ENCODE measurements at regions of chr16 and their contacts with region 1.

Region 1: GRCh38 chr16:87636072-87636684 is 33.9 kb downstream of the JPH3 start:
- DNase-seq: peak; percentile 89
- ATAC-seq: peak; percentile 96 to 97

Region 2: GRCh38 chr16:87316923-87317749 is 319.0 kb before region 1 on chr16 and contains the start of gene C16orf95:
- intact Hi-C with region 1: loop called in 1 of 2 experiments (anchors 5 kb)
- DNase-seq: peak; percentile 96
- ATAC-seq: peak; percentile 98
- total RNA-seq, gene C16orf95: 3.2 to 3.4 TPM

Region 3: DNA sequence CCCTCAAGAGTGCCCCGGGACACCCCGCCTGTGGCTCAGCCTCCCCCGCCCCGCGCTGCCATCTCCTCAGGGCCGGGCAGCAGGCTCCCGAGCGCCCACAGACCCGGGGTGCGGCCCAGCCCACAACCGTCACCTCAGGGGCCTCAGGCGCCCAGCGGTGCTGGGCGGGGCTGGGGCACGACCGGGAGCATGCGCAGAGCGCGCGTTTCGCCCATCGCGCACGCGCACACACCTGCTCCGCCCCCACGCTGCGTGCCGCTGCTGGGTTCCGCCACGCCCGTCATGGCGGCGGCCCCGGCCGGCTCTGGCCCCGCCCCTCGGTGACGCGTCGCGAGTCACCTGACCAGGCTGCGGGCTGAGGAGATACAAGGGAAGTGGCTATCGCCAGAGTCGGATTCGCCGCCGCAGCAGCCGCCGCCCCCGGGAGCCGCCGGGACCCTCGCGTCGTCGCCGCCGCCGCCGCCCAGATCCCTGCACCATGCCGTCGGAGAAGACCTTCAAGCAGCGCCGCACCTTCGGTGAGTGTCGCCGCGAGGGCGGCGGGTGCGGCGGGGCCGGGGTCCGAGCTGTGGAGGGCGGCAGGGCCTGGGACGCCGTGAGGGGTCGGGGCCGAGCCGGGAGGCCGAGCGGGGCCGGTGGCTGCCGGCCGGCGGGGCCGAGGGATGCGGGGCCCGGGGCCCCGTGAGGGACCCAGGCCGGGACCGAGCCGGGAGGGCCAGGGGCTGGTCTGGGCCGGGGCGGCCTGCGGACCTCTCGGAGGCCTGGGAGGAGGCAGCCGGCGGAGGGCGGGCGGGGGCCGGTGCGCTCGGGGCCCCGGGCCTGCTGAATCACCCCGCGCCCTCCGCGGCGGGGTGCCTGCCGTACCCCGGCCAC is 244.0 kb before region 1 on chr16 and contains the start of gene MAP1LC3B:
- intact Hi-C with region 1: loop called in 1 of 2 experiments (anchors 10 kb)
- DNase-seq: peak; percentile 96
- ATAC-seq: peak; percentile 92
- total RNA-seq, gene MAP1LC3B: 82.9 to 90.2 TPM

Region 4: GRCh38 chr16:87586201-87586782 is 49.9 kb before region 1 on chr16:
- intact Hi-C with region 1: loop called (anchors 2 to 5 kb)
- DNase-seq: no peak
- ATAC-seq: no peak

Region 5: GRCh38 chr16:87725596-87726235 is 89.5 kb after region 1 on chr16:
- intact Hi-C with region 1: no loop called
- DNase-seq: no peak
- ATAC-seq: no peak